Panc1 (cell line): ENCODE measurements at regions of chr7 and their contacts with region 1.

Region 1: DNA sequence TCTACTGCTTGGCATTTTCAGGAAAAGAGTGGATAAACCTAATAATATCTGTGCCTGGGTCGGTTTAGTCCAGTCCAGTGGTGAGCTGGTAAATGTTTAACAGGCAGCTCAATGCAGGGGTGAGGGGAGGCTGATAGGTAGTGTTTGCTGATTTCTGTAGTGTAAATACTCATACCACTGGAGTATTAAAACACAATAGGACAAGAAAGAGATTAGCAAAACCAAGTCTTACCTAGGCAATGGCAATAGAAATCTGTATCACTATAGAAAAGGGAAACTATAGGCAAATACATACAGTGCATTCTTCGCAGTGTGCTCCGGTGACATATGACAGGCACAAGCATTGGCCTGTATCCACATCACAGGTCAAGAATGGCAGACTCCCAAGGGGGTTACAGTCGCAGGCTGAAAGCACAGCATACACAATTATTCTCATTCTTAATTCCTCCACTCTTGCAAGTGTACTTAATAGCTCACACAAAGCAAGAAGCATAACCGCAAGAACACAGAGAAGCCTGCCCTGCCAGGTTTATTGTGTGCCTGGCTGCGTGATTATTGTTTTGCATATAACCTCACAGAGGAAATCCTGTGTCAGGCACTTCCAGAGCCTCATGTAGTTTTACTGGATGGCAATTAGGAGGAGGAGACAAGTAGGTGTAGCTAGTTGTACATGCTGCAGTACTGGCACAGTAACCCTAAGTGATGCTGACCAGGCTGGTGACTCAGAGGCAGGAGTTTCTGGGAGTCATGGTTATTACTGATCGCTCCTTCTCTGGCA is 35.0 kb downstream of the LAMB4 start:
- DNase-seq: peak; percentile 79
- ATAC-seq: peak; percentile 90
- H3K4me3 ChIP-seq: peak overlapping the region in 1 of 2 experiments; percentile 16; a peak in 1 of 4 replicates
- H3K27ac ChIP-seq: no peak overlapping the region; the same call in 1 of the 2 replicates
- H3K4me1 ChIP-seq: peaks cover 26% of the 10 kb centered on the region
- H3K27me3 ChIP-seq: no peaks in the 10 kb centered on the region
- CTCF ChIP-seq: no peak

Region 2: GRCh38 chr7:108016841-108017775 is 78.0 kb before region 1 on chr7:
- CTCF ChIA-PET with region 1: no interaction called
- POLR2A ChIA-PET with region 1: interaction called, 10 read pairs
- in situ Hi-C with region 1: no loop called
- intact Hi-C with region 1: loop called (anchors 10 kb)
- DNase-seq: no peak
- ATAC-seq: peak; percentile 74
- H3K4me3 ChIP-seq: no peak overlapping the region
- H3K27ac ChIP-seq: peak overlapping the region; percentile 71
- H3K4me1 ChIP-seq: peaks cover 55% of the 10 kb centered on the region
- H3K27me3 ChIP-seq: no peaks in the 10 kb centered on the region
- CTCF ChIP-seq: peak; percentile 66

Region 3: DNA sequence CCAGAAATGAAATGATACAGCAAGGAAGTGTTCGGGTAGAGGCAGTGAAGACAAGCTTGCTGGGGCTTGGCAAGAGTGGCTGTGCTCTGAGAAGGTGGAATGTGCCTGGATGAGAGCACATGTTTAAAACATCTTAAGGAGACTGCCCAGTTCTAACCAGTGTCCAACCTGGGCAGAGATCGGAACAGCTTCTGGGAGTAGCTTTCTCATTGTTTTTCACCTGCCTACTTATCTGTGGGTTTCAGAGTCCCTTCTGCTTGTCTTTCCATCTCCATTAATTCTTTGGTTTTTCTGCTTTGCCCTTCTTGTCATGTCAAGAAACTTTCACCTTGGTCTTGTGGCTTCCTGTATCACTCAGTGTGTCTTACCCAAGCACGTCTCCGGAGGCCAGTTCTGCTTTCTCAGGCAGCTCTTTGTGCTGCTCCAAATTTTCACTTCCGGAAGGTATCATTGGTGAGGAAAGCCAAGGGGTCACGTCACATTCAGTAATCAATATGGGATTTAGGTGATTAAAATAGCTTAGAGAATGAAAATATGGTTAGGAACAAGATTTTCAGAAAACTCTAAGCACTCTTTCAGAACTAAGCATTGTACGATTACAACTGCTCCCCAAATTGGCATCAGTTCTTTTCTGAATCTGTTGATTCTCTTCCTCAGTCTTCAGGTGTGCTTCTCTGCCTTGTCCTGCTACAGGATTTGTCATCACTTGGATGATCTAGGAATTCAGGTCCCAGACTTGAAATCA is 40.5 kb after region 1 on chr7:
- CTCF ChIA-PET with region 1: no interaction called
- POLR2A ChIA-PET with region 1: no interaction called
- in situ Hi-C with region 1: no loop called
- intact Hi-C with region 1: no loop called
- DNase-seq: no peak
- ATAC-seq: no peak
- H3K4me3 ChIP-seq: no peak overlapping the region
- H3K27ac ChIP-seq: no peak overlapping the region
- H3K4me1 ChIP-seq: no peaks in the 10 kb centered on the region
- H3K27me3 ChIP-seq: no peaks in the 10 kb centered on the region
- CTCF ChIP-seq: no peak

Region 4: GRCh38 chr7:108146070-108146837 is 51.1 kb after region 1 on chr7:
- CTCF ChIA-PET with region 1: no interaction called
- POLR2A ChIA-PET with region 1: no interaction called
- in situ Hi-C with region 1: no loop called
- intact Hi-C with region 1: no loop called
- DNase-seq: peak; percentile 71
- ATAC-seq: peak; percentile 88
- H3K4me3 ChIP-seq: peak overlapping the region in 1 of 2 experiments; percentile 43; a peak in 2 of 4 replicates
- H3K27ac ChIP-seq: no peak overlapping the region
- H3K4me1 ChIP-seq: peaks cover 4% of the 10 kb centered on the region; the same call in 1 of the 2 replicates
- H3K27me3 ChIP-seq: peaks cover 3% of the 10 kb centered on the region; the same call in 1 of the 2 replicates
- CTCF ChIP-seq: peak; percentile 96